Naive thymus-derived CD8-positive, alpha-beta T cell (primary cell): ENCODE measurements at regions of chr20 and their contacts with region 1.

Region 1: GRCh38 chr20:59120491-59120890 is 43.1 kb upstream of the ZNF831 start:
- DNase-seq: peak in 7 of 10 donors; percentile 24 to 56 (median 51)
- ATAC-seq: peak in 1 of 2 donors; percentile 16
- H3K4me3 Mint-ChIP-seq: peak overlapping the region in 9 of 10 donors; percentile 31 to 95 (median 88)
- H3K27ac Mint-ChIP-seq: peak overlapping the region; percentile 99 to 100 (median 100)
- H3K4me1 Mint-ChIP-seq: peaks cover 61 to 99% (median 92%) of the 10 kb centered on the region in 4 donors
- H3K27me3 Mint-ChIP-seq: no peaks in the 10 kb centered on the region

Region 2: DNA sequence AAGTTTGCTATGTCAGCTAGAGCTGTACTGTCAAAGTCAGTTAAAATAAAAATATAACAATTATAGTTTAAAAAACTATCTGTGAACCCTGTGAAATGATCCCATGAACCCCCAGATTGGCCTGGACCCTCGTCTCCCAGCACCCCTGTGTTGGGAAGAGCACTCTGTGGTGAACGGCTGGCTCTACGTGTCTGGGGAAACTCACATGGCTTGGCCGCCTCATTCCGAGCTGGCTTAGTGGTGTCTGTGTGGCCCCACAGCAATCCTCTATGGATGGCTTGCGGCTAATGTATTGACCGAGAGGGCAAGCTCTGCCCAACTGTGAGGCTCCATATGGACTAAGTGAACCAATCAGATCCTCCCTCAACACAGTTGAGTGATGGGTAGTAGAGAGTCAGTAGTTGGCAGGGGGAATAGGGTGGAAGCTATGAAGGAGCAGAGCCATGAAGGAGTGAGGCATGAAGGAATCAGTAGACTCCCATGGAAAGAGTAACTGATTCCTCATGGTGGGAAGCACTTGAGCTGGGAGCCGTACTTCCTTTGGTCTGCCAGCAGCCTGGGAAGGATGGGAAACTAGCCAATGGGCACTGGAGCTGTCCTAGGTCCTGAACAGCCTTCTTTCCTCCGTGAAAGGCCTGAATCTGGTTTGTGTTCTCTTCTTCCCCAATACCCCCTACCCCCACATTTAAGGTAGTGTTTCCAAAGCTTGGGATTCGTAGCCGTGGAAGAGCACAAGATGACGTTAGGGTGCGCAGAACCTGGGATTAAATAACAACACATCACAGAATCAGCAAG is 21.5 kb after region 1 on chr20:
- POLR2A ChIA-PET with region 1: interaction called, 190 read pairs
- DNase-seq: no peak
- ATAC-seq: no peak
- H3K4me3 Mint-ChIP-seq: no peak overlapping the region
- H3K27ac Mint-ChIP-seq: peak overlapping the region in 1 of 10 donors; percentile 41
- H3K4me1 Mint-ChIP-seq: peaks cover 18 to 71% (median 54%) of the 10 kb centered on the region in 4 donors
- H3K27me3 Mint-ChIP-seq: no peaks in the 10 kb centered on the region

Region 3: DNA sequence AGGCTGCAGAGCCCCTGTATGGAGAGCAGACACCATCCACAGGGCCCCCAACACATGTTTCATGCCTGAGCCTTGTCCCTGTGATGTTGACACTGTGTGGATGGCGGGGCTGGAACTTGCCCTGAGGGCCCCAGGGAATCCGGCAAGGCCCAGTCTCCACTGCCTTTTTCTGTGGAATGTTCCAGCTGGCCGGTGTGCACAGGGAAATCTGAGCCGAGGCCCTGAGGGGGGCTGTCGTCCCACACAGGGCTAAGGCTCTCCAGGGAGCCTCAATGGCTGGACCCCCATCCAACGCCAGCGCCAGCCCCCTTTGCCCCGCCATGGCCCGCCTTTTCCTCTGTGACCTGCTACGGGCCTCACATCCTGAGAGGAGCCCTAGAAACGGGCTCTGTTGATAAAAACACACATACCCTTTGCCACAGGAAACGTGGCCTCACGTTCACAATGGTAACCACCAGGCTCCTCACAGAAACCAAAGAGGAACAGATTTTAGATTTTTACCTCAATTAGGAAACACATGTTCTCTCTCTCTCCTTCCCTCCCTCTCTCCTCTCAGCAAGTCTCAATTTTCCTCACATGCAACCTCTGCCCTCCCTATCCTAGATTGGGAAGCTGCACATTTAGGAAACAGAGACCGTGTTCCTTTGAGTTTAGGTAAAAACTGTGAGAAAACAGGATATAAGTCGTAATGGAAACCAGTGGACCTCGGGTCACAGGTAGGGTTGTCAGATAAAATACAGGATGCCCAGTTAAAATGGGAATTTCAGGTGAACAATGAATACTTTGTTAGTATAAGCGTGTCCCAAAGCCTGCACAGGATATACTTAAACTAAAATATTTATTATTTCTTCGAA is 29.4 kb after region 1 on chr20:
- POLR2A ChIA-PET with region 1: interaction called, 190 read pairs
- DNase-seq: peak; percentile 55 to 95 (median 86)
- ATAC-seq: peak; percentile 71 to 85
- H3K4me3 Mint-ChIP-seq: peak overlapping the region; percentile 62 to 86 (median 75)
- H3K27ac Mint-ChIP-seq: peak overlapping the region; percentile 96 to 100 (median 99)
- H3K4me1 Mint-ChIP-seq: peaks cover 54 to 97% (median 97%) of the 10 kb centered on the region in 4 donors
- H3K27me3 Mint-ChIP-seq: no peaks in the 10 kb centered on the region

Region 4: GRCh38 chr20:59159493-59160376 is 39.2 kb after region 1 on chr20:
- POLR2A ChIA-PET with region 1: interaction called, 72 read pairs
- DNase-seq: peak; percentile 51 to 92 (median 86)
- ATAC-seq: peak; percentile 74 to 89
- H3K4me3 Mint-ChIP-seq: peak overlapping the region; percentile 83 to 96 (median 90)
- H3K27ac Mint-ChIP-seq: peak overlapping the region; percentile 97 to 100 (median 99)
- H3K4me1 Mint-ChIP-seq: peaks cover 53 to 88% (median 84%) of the 10 kb centered on the region in 4 donors
- H3K27me3 Mint-ChIP-seq: no peaks in the 10 kb centered on the region

Region 5: GRCh38 chr20:59173938-59174496 is 53.5 kb after region 1 on chr20:
- POLR2A ChIA-PET with region 1: interaction called, 16 read pairs
- DNase-seq: no peak
- ATAC-seq: no peak
- H3K4me3 Mint-ChIP-seq: peak overlapping the region in 2 of 10 donors; percentile 43 to 68
- H3K27ac Mint-ChIP-seq: peak overlapping the region in 9 of 10 donors; percentile 50 to 94 (median 91)
- H3K4me1 Mint-ChIP-seq: peaks cover 49 to 97% (median 92%) of the 10 kb centered on the region in 4 donors
- H3K27me3 Mint-ChIP-seq: no peaks in the 10 kb centered on the region

Region 6: GRCh38 chr20:59207742-59208357 is 87.4 kb after region 1 on chr20:
- POLR2A ChIA-PET with region 1: interaction called, 22 read pairs
- DNase-seq: peak; percentile 63 to 92 (median 78)
- ATAC-seq: peak; percentile 96 to 98
- H3K4me3 Mint-ChIP-seq: no peak overlapping the region
- H3K27ac Mint-ChIP-seq: peak overlapping the region; percentile 17 to 96 (median 84)
- H3K4me1 Mint-ChIP-seq: peaks cover 17 to 50% (median 36%) of the 10 kb centered on the region in 4 donors
- H3K27me3 Mint-ChIP-seq: no peaks in the 10 kb centered on the region

Region 7: GRCh38 chr20:59259946-59260345 is 139.5 kb after region 1 on chr20:
- POLR2A ChIA-PET with region 1: no interaction called
- DNase-seq: no peak
- ATAC-seq: no peak
- H3K4me3 Mint-ChIP-seq: no peak overlapping the region
- H3K27ac Mint-ChIP-seq: peak overlapping the region in 1 of 10 donors; percentile 34
- H3K4me1 Mint-ChIP-seq: peaks cover 17 to 31% (median 27%) of the 10 kb centered on the region in 4 donors
- H3K27me3 Mint-ChIP-seq: no peaks in the 10 kb centered on the region